ENCODE measurements at regions of chr5 and their contacts with region 1.

Region 1: DNA sequence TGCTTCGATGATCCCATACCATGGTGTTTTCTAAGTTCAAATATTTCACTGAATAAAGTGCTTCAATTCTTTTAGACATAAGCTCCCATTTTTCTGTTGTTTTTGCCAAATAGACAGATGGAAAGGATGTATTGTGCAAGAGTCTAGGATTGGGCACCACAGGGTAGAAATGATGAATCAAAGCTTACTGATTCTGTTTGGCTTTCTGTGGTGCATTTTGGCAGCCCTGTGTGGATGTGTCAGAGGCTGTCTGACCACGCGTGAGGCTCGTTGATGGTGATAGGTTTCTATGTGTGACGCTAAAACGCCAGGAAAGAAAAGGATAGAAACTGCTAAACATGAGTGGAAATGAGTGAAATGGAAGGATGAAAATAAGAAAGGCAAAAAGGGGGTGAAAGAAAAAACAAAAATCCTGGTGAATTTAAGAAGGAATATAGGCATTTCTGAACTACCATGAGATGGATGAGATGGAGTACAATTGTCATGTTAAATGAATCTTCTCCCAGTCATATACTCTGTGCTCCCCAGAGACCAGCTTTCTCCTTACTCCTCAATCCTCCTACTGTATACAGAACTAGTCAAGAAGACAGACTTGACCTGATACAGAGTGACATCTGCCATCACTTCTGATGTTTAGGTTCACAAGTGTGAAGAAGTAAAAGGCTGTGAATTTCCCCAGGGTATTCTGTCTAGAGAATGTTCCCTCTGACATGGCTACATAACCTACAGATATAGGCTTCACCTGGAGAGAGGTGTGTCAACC is 54.4 kb downstream of the ANKH start:
- DNase-seq: no peak
- ATAC-seq: peak in 3 of 8 donors; percentile 47 to 83 (median 53)
- H3K4me3 ChIP-seq: no peak overlapping the region
- H3K27ac ChIP-seq: peak overlapping the region in 1 of 10 donors; percentile 64
- H3K4me1 ChIP-seq: peaks cover 3 to 71% (median 42%) of the 10 kb centered on the region in 9 donors
- H3K27me3 ChIP-seq: no peaks in the 10 kb centered on the region
- CTCF ChIP-seq: no peak

Region 2: DNA sequence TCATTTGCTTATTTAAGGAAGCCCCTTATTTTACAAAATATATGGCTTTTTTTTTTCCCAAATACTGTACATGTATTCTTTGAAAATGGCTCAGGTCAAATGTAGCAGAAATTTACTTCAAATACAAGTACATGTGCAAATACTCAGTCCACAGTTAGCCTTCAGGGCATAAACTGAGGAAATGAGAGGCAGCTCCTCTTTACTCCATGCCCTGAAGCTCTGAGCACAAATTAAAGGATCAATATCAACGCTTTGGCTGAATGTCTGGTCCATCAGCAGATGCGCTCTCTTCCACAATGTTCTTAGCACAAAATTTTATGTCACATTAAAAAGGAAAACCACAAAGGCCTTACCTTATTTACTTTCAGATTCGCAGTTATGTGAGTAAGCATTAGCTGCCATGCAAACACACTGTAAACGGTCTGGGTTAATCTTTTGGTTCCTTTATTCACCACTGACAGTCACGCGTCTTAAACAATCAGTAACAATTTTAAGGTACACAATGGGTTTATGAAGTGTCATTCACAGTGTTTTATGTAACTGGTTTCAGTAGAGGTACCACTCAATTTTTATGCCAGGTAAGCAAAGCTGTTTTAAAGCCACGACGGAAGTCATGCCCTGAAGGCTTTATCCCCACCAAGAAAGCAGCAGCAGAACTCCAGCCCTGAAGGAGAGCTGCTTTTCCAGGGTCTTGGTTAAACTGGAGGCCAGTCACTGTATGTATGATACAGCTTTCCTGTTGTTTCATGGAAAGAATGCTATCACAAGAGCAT is 49.3 kb before region 1 on chr5:
- intact Hi-C with region 1: loop called in 1 of 10 experiments (anchors 5 kb)
- DNase-seq: no peak
- ATAC-seq: peak in 1 of 8 donors; percentile 32
- H3K4me3 ChIP-seq: no peak overlapping the region
- H3K27ac ChIP-seq: peak overlapping the region in 2 of 10 donors; percentile 19 to 34
- H3K4me1 ChIP-seq: peaks cover 0 to 22% (median 5%) of the 10 kb centered on the region in 9 donors
- H3K27me3 ChIP-seq: no peaks in the 10 kb centered on the region
- CTCF ChIP-seq: no peak

Region 3: GRCh38 chr5:14954616-14955343 is 137.6 kb after region 1 on chr5:
- intact Hi-C with region 1: no loop called
- DNase-seq: peak; percentile 11 to 14
- ATAC-seq: peak in 7 of 8 donors; percentile 51 to 84 (median 62)
- H3K4me3 ChIP-seq: no peak overlapping the region
- H3K27ac ChIP-seq: no peak overlapping the region
- H3K4me1 ChIP-seq: peaks cover 0 to 17% (median 7%) of the 10 kb centered on the region in 9 donors
- H3K27me3 ChIP-seq: no peaks in the 10 kb centered on the region
- CTCF ChIP-seq: no peak